Activated CD8-positive, alpha-beta T cell treated with anti-CD3 and anti-CD28 coated beads, Interleukin-2, amount 10 ng/mL, durations not matched to agents 7 days and 5 days (primary cell): ENCODE measurements at regions of chr15 and their contacts with region 1.

Region 1: GRCh38 chr15:73633111-73633990 is at the start of gene NPTN:
- DNase-seq: peak; percentile 98
- ATAC-seq: peak; percentile 98
- H3K4me3 Mint-ChIP-seq: peak within 1 kb of the TSS; percentile 80
- H3K27ac Mint-ChIP-seq: peak within 1 kb of the TSS; percentile 69
- H3K4me1 Mint-ChIP-seq: peaks cover 40% of the 10 kb centered on the region
- H3K27me3 Mint-ChIP-seq: peaks cover 14% of the 10 kb centered on the region
- total RNA-seq, gene NPTN: 31.4 to 33.0 TPM

Region 2: DNA sequence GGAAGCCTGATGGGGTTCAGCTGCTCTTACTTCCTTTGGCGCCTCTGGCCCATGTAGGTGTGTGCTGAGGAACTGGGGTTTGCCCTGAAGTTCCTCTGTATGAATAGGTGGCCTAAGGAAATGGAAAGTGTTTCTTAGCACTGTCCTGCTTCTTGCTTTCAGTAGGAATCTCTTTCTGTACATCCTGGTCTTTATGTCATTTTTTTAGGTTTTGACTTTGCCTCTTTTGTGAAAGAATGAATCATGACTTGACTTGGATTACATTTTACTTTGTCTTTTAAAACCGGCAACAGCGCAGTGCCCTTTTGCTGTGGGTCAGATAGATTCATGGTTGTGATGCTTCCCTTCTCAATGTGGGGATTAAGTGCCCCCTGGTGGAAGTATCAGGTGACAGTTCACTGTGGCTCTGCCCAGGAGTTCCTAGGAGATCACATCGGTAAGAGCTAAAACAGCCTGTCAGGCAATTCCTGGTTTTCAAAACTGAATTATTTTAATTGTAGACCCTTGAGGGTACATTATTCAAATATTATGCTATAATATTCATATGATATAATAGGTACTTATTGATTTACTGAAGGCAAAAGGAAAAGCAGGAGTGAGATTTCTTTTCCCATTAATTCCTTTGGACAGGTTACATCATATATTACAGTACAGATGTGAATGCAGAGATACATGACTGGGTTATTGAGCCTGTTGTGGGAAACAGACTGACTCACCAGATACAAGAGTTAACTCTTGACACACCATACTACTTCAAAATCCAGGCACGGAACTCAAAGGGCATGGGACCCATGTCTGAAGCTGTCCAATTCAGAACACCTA is 360.0 kb before region 1 on chr15:
- CTCF ChIA-PET with region 1: interaction called, 11 read pairs
- POLR2A ChIA-PET with region 1: no interaction called
- DNase-seq: peak; percentile 65
- ATAC-seq: peak; percentile 86
- H3K4me3 Mint-ChIP-seq: no peak overlapping the region
- H3K27ac Mint-ChIP-seq: no peak overlapping the region
- H3K4me1 Mint-ChIP-seq: peaks cover 3% of the 10 kb centered on the region
- H3K27me3 Mint-ChIP-seq: peaks cover 5% of the 10 kb centered on the region

Region 3: GRCh38 chr15:73474785-73475184 is 158.6 kb before region 1 on chr15:
- CTCF ChIA-PET with region 1: no interaction called
- POLR2A ChIA-PET with region 1: no interaction called
- DNase-seq: no peak
- ATAC-seq: no peak
- H3K4me3 Mint-ChIP-seq: no peak overlapping the region
- H3K27ac Mint-ChIP-seq: no peak overlapping the region
- H3K4me1 Mint-ChIP-seq: no peaks in the 10 kb centered on the region
- H3K27me3 Mint-ChIP-seq: peaks cover 38% of the 10 kb centered on the region

Region 4: GRCh38 chr15:73560501-73561117 is 72.7 kb before region 1 on chr15:
- CTCF ChIA-PET with region 1: interaction called, 135 read pairs
- POLR2A ChIA-PET with region 1: interaction called, 4 read pairs
- DNase-seq: peak; percentile 51
- ATAC-seq: no peak
- H3K4me3 Mint-ChIP-seq: no peak overlapping the region
- H3K27ac Mint-ChIP-seq: no peak overlapping the region
- H3K4me1 Mint-ChIP-seq: peaks cover 8% of the 10 kb centered on the region
- H3K27me3 Mint-ChIP-seq: no peaks in the 10 kb centered on the region

Region 5: GRCh38 chr15:73601451-73602445 is 31.6 kb before region 1 on chr15:
- CTCF ChIA-PET with region 1: interaction called, 109 read pairs
- POLR2A ChIA-PET with region 1: no interaction called
- DNase-seq: no peak
- ATAC-seq: no peak
- H3K4me3 Mint-ChIP-seq: no peak overlapping the region
- H3K27ac Mint-ChIP-seq: no peak overlapping the region
- H3K4me1 Mint-ChIP-seq: peaks cover under 1% of the 10 kb centered on the region
- H3K27me3 Mint-ChIP-seq: no peaks in the 10 kb centered on the region

Region 6: DNA sequence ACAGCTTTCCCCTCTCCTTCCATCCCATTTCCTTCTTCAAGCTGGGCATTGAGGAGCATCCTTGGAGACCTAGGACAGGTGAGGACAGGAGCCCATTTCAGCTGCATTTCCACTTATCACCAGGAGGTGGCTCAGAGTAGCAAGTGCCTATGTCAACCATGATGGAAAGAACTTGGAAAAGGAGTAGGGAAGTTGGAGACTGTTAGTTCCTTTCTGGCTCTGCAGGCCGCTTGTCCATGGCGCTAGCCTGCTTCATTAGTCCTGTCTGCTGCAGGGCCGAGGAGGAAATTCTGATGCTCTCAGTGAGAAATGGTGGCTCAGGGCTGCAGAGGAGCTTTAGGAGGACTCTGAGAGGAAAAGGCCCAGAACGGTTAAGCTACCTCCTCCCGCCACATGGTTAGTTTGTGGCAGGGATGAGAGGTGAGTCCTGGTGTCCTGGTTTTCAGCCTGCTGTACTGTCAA is 43.8 kb after region 1 on chr15:
- CTCF ChIA-PET with region 1: interaction called, 38 read pairs
- POLR2A ChIA-PET with region 1: no interaction called
- DNase-seq: peak; percentile 63
- ATAC-seq: peak; percentile 65
- H3K4me3 Mint-ChIP-seq: no peak overlapping the region
- H3K27ac Mint-ChIP-seq: no peak overlapping the region
- H3K4me1 Mint-ChIP-seq: peaks cover 12% of the 10 kb centered on the region
- H3K27me3 Mint-ChIP-seq: peaks cover 47% of the 10 kb centered on the region

Region 7: GRCh38 chr15:73697033-73697467 is 63.7 kb after region 1 on chr15:
- CTCF ChIA-PET with region 1: interaction called, 228 read pairs
- POLR2A ChIA-PET with region 1: interaction called, 4 read pairs
- DNase-seq: peak; percentile 91
- ATAC-seq: peak; percentile 90
- H3K4me3 Mint-ChIP-seq: peak overlapping the region; percentile 30
- H3K27ac Mint-ChIP-seq: no peak overlapping the region
- H3K4me1 Mint-ChIP-seq: peaks cover 35% of the 10 kb centered on the region
- H3K27me3 Mint-ChIP-seq: peaks cover 59% of the 10 kb centered on the region